ENCODE measurements at regions of chr9 and their contacts with region 1.

Region 1: GRCh38 chr9:124415102-124415851 is at the start of gene PSMB7:
- DNase-seq: peak; percentile 97
- H3K4me3 ChIP-seq: peak within 1 kb of the TSS; percentile 33 to 96 (median 67)
- H3K27ac ChIP-seq: peak within 1 kb of the TSS in 1 of 3 donors; percentile 52
- H3K4me1 ChIP-seq: peaks cover 10 to 17% of the 10 kb centered on the region in 2 donors
- H3K27me3 ChIP-seq: no peaks in the 10 kb centered on the region
- CTCF ChIP-seq: peak in 5 of 6 experiments; percentile 64 to 95 (median 86)
- POLR2A ChIP-seq: peak in 1 of 2 donors; percentile 59
- total RNA-seq, gene PSMB7: 84.3 to 178 (median 135) TPM

Region 2: DNA sequence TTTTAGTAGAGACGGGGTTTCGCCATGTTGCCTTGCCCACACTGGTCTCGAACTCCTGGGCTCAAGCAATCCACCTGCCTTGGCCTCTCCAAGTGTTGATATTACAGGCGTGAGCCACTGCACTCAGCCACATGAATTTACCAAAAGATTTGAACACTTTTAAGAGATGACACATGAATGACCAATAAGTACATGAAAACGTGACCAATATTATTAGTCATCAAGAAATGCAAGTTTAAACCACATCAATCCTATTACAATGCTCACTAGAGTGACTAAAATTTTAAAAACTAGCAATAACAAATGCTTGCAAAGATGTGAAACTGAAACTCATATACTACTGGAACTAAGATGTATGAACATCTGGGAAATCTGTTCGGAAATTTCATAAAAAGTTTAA is 301.5 kb after region 1 on chr9:
- intact Hi-C with region 1: loop called (anchors 10 kb)
- DNase-seq: no peak
- H3K4me3 ChIP-seq: no peak overlapping the region
- H3K27ac ChIP-seq: no peak overlapping the region
- H3K4me1 ChIP-seq: peaks cover 17 to 22% of the 10 kb centered on the region in 2 donors
- H3K27me3 ChIP-seq: no peaks in the 10 kb centered on the region
- CTCF ChIP-seq: no peak
- POLR2A ChIP-seq: no peak

Measured in thyroid gland (tissue), 4 donors.